Caco-2 (cell line): ENCODE measurements at regions of chr21 and their contacts with region 1.

Region 1: GRCh38 chr21:17542371-17543011 is 29.6 kb downstream of the CXADR start:
- DNase-seq: peak in 1 of 2 experiments; percentile 57
- H3K4me3 ChIP-seq: no peak overlapping the region
- H3K4me3 Mint-ChIP-seq: peak overlapping the region; percentile 54
- H3K27ac Mint-ChIP-seq: no peak overlapping the region
- H3K4me1 ChIP-seq: peaks cover 54% of the 10 kb centered on the region
- H3K4me1 Mint-ChIP-seq: peaks cover 71% of the 10 kb centered on the region
- H3K27me3 ChIP-seq: no peaks in the 10 kb centered on the region
- H3K27me3 Mint-ChIP-seq: no peaks in the 10 kb centered on the region
- CTCF ChIP-seq: no peak

Region 2: GRCh38 chr21:17501107-17502006 is 41.1 kb before region 1 on chr21:
- CTCF ChIA-PET with region 1: no interaction called
- POLR2A ChIA-PET with region 1: no interaction called
- intact Hi-C with region 1: loop called (anchors 1 kb)
- DNase-seq: peak; percentile 80 to 84
- H3K4me3 ChIP-seq: no peak overlapping the region
- H3K4me3 Mint-ChIP-seq: peak overlapping the region; percentile 19
- H3K27ac Mint-ChIP-seq: peak overlapping the region; percentile 76
- H3K4me1 ChIP-seq: peaks cover 43% of the 10 kb centered on the region
- H3K4me1 Mint-ChIP-seq: peaks cover 42% of the 10 kb centered on the region
- H3K27me3 ChIP-seq: no peaks in the 10 kb centered on the region
- H3K27me3 Mint-ChIP-seq: no peaks in the 10 kb centered on the region
- CTCF ChIP-seq: no peak